CD4-positive, alpha-beta memory T cell (primary cell): ENCODE measurements at regions of chr18 and their contacts with region 1.

Region 1: GRCh38 chr18:74896390-74896991 is 298.8 kb downstream of the ZNF407 start:
- DNase-seq: peak; percentile 36 to 46 (median 43)
- H3K4me3 ChIP-seq: no peak overlapping the region
- H3K4me3 Mint-ChIP-seq: no peak overlapping the region
- H3K27ac ChIP-seq: no peak overlapping the region
- H3K27ac Mint-ChIP-seq: peak overlapping the region in 4 of 7 donors; percentile 0 to 47 (median 24)
- H3K4me1 ChIP-seq: no peaks in the 10 kb centered on the region
- H3K4me1 Mint-ChIP-seq: peaks cover 4 to 13% (median 7%) of the 10 kb centered on the region in 4 donors
- H3K27me3 ChIP-seq: no peaks in the 10 kb centered on the region
- H3K27me3 Mint-ChIP-seq: no peaks in the 10 kb centered on the region

Region 2: GRCh38 chr18:74819433-74820059 is 76.9 kb before region 1 on chr18:
- CTCF ChIA-PET with region 1: no interaction called
- POLR2A ChIA-PET with region 1: no interaction called
- intact Hi-C with region 1: no loop called
- DNase-seq: no peak
- H3K4me3 ChIP-seq: no peak overlapping the region
- H3K4me3 Mint-ChIP-seq: no peak overlapping the region
- H3K27ac ChIP-seq: no peak overlapping the region
- H3K27ac Mint-ChIP-seq: no peak overlapping the region
- H3K4me1 ChIP-seq: no peaks in the 10 kb centered on the region
- H3K4me1 Mint-ChIP-seq: peaks cover 0 to 6% (median under 1%) of the 10 kb centered on the region in 4 donors
- H3K27me3 ChIP-seq: no peaks in the 10 kb centered on the region
- H3K27me3 Mint-ChIP-seq: no peaks in the 10 kb centered on the region

Region 3: DNA sequence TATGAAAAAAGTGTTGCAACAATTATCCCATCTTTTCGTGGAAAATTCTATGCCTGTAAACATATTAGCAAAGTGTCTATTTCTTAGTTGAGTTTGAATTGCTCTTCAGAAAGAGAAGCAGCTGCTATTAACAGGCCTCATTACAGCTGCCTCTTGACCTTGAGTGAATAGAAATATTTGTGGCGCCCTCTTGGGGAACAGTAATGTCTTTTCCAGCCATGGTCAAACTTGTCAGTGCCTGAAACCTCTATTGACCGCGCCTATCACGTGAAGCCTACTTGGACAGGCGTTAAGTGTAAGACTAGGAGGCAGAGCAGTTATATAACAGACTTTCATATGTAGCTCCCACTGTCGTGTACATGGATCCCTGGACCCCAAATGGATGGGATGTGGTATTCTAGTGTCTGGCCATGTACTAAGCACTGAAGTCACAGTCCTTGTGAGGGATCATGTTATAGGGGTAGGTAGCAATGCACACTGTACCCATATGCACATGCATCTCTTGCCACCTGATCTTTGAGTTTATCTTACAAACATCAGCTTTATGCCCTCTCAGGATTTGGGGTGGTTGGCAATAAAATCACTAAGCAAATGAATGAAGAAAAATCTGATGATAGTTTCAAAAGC is 67.4 kb after region 1 on chr18:
- CTCF ChIA-PET with region 1: interaction called, 7 read pairs
- POLR2A ChIA-PET with region 1: no interaction called
- intact Hi-C with region 1: loop called (anchors 1 kb)
- DNase-seq: no peak
- H3K4me3 ChIP-seq: no peak overlapping the region
- H3K4me3 Mint-ChIP-seq: no peak overlapping the region
- H3K27ac ChIP-seq: no peak overlapping the region
- H3K27ac Mint-ChIP-seq: peak overlapping the region in 1 of 7 donors; percentile 27
- H3K4me1 ChIP-seq: no peaks in the 10 kb centered on the region
- H3K4me1 Mint-ChIP-seq: peaks cover 0 to 13% (median 4%) of the 10 kb centered on the region in 4 donors
- H3K27me3 ChIP-seq: no peaks in the 10 kb centered on the region
- H3K27me3 Mint-ChIP-seq: no peaks in the 10 kb centered on the region

Region 4: GRCh38 chr18:75070625-75071483 is 174.4 kb after region 1 on chr18:
- CTCF ChIA-PET with region 1: no interaction called
- POLR2A ChIA-PET with region 1: interaction called, 3 read pairs
- intact Hi-C with region 1: loop called (anchors 1 kb)
- DNase-seq: peak; percentile 70 to 89 (median 74)
- H3K4me3 ChIP-seq: peak overlapping the region; percentile 51 to 58
- H3K4me3 Mint-ChIP-seq: peak overlapping the region; percentile 79 to 97 (median 90)
- H3K27ac ChIP-seq: peak overlapping the region; percentile 74
- H3K27ac Mint-ChIP-seq: peak overlapping the region; percentile 89 to 100 (median 99)
- H3K4me1 ChIP-seq: peaks cover 34% of the 10 kb centered on the region
- H3K4me1 Mint-ChIP-seq: peaks cover 35 to 57% (median 41%) of the 10 kb centered on the region in 4 donors
- H3K27me3 ChIP-seq: no peaks in the 10 kb centered on the region
- H3K27me3 Mint-ChIP-seq: no peaks in the 10 kb centered on the region

Region 5: GRCh38 chr18:75173125-75173432 is 276.6 kb after region 1 on chr18:
- CTCF ChIA-PET with region 1: no interaction called
- POLR2A ChIA-PET with region 1: no interaction called
- intact Hi-C with region 1: loop called (anchors 5 kb)
- DNase-seq: peak in 1 of 5 donors; percentile 11
- H3K4me3 ChIP-seq: no peak overlapping the region
- H3K4me3 Mint-ChIP-seq: no peak overlapping the region
- H3K27ac ChIP-seq: no peak overlapping the region
- H3K27ac Mint-ChIP-seq: peak overlapping the region in 1 of 7 donors; percentile 17
- H3K4me1 ChIP-seq: peaks cover 4% of the 10 kb centered on the region
- H3K4me1 Mint-ChIP-seq: peaks cover 0 to 9% (median 7%) of the 10 kb centered on the region in 4 donors
- H3K27me3 ChIP-seq: no peaks in the 10 kb centered on the region
- H3K27me3 Mint-ChIP-seq: peaks cover 3 to 5% of the 10 kb centered on the region in 2 donors

Region 6: DNA sequence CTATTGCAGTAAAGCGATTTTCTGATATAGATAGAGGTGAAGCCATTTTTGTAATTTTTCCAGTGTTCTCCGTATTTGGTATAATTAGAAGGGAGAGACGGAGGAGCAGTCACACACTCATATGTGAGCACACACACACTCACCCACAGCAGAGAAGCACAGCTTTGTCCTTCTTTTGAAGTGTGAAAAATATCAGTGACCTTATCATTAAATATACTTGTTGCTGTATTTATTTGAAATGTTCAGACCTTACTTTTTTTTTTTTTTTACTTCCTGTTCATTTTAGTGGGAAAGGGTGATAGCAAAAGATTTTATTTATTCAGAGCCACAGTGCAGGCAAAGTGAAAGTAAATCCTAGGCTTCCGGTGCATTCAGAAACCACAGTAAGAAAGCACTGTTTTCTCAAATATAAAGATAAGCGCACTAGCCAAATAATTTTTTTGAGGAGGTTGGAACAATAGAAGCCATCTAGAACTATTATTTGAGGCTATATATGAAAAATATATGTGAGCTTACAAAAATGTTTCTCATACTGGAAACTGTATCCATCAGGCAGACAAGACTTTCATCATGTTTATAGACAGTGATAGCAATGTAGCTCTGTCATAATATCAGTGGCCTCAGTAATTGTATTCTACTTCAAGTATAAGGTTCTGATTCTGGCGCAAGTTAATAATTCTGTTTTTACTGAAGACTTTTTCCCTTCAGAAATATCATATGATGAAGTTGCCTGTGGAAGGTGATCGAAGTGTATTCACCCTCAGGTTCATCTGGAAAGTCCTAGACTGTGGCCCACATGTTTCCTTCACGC is 351.3 kb after region 1 on chr18:
- CTCF ChIA-PET with region 1: interaction called, 10 read pairs
- POLR2A ChIA-PET with region 1: no interaction called
- intact Hi-C with region 1: loop called (anchors 1 kb)
- DNase-seq: peak in 4 of 5 donors; percentile 51 to 61 (median 56)
- H3K4me3 ChIP-seq: peak overlapping the region; percentile 19 to 49
- H3K4me3 Mint-ChIP-seq: peak overlapping the region; percentile 80 to 91 (median 88)
- H3K27ac ChIP-seq: peak overlapping the region; percentile 46
- H3K27ac Mint-ChIP-seq: peak overlapping the region; percentile 88 to 98 (median 93)
- H3K4me1 ChIP-seq: peaks cover 51% of the 10 kb centered on the region
- H3K4me1 Mint-ChIP-seq: peaks cover 51 to 92% (median 70%) of the 10 kb centered on the region in 4 donors
- H3K27me3 ChIP-seq: no peaks in the 10 kb centered on the region
- H3K27me3 Mint-ChIP-seq: no peaks in the 10 kb centered on the region

Region 7: GRCh38 chr18:75364512-75365253 is 468.2 kb after region 1 on chr18:
- CTCF ChIA-PET with region 1: no interaction called
- POLR2A ChIA-PET with region 1: no interaction called
- intact Hi-C with region 1: loop called (anchors 2 kb)
- DNase-seq: no peak
- H3K4me3 ChIP-seq: no peak overlapping the region
- H3K4me3 Mint-ChIP-seq: no peak overlapping the region
- H3K27ac ChIP-seq: no peak overlapping the region
- H3K27ac Mint-ChIP-seq: no peak overlapping the region
- H3K4me1 ChIP-seq: no peaks in the 10 kb centered on the region
- H3K4me1 Mint-ChIP-seq: peaks cover 0 to 1% (median under 1%) of the 10 kb centered on the region in 4 donors
- H3K27me3 ChIP-seq: no peaks in the 10 kb centered on the region
- H3K27me3 Mint-ChIP-seq: peaks cover under 1 to 1% of the 10 kb centered on the region in 2 donors

Region 8: GRCh38 chr18:75478996-75479880 is 582.7 kb after region 1 on chr18:
- CTCF ChIA-PET with region 1: interaction called, 12 read pairs
- POLR2A ChIA-PET with region 1: no interaction called
- intact Hi-C with region 1: loop called (anchors 1 kb)
- DNase-seq: peak in 4 of 5 donors; percentile 41 to 48 (median 43)
- H3K4me3 ChIP-seq: no peak overlapping the region
- H3K4me3 Mint-ChIP-seq: no peak overlapping the region
- H3K27ac ChIP-seq: no peak overlapping the region
- H3K27ac Mint-ChIP-seq: no peak overlapping the region
- H3K4me1 ChIP-seq: no peaks in the 10 kb centered on the region
- H3K4me1 Mint-ChIP-seq: peaks cover 0 to 5% (median 0%) of the 10 kb centered on the region in 4 donors
- H3K27me3 ChIP-seq: no peaks in the 10 kb centered on the region
- H3K27me3 Mint-ChIP-seq: peaks cover 14 to 16% of the 10 kb centered on the region in 2 donors